ENCODE measurements at regions of chr14 and their contacts with region 1.

Region 1: DNA sequence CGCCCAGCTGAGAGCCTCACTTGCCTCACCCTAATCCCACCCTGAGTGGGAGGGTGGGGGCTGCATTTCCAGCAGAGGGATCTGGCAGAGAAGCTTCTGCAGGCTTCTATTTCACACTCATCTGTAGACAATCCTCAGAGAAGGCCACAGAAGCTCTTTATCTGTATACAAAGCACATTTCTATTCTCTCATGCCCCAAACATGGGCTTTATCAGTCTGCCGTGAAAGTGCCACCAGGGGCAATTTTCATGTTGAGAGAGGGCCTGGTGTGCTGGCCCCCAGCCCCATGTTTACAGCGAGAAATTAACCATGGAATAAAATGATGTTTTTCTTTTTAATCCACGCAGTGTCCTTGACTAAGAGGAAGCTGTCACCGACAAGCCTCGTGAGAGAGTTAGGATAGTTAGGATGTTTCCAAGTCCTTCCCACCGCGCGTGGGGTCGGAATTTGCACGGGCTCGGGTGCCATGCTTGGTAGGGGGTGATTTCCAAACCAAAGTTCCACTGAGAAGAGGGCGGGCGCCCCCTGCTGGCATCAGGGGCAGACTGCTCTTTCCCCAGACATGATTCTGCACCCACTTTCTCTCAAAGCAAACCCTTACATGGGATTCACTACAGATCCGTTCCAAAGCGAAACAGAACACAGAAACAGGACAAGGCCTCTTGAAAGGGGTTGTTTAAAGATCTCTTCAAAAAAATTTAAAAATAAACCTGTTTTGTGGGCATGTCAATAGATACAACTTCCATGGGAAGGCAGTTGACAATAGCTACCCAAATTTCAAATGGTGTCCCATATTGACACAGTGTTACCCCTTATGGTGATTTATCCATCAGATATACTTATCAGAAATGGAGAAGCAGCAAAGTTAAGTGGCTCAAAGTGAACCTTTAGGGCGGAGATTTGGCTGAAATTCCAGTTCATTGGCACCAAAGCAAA is 19.4 kb downstream of the BDKRB1 start:
- DNase-seq: peak; percentile 34 to 74 (median 63)
- ATAC-seq: no peak
- H3K4me3 ChIP-seq: no peak overlapping the region
- H3K4me3 Mint-ChIP-seq: no peak overlapping the region
- H3K27ac ChIP-seq: no peak overlapping the region
- H3K27ac Mint-ChIP-seq: no peak overlapping the region
- H3K4me1 ChIP-seq: no peaks in the 10 kb centered on the region
- H3K4me1 Mint-ChIP-seq: no peaks in the 10 kb centered on the region
- H3K27me3 ChIP-seq: no peaks in the 10 kb centered on the region
- H3K27me3 Mint-ChIP-seq: no peaks in the 10 kb centered on the region
- CTCF ChIP-seq: peak; percentile 81

Region 2: DNA sequence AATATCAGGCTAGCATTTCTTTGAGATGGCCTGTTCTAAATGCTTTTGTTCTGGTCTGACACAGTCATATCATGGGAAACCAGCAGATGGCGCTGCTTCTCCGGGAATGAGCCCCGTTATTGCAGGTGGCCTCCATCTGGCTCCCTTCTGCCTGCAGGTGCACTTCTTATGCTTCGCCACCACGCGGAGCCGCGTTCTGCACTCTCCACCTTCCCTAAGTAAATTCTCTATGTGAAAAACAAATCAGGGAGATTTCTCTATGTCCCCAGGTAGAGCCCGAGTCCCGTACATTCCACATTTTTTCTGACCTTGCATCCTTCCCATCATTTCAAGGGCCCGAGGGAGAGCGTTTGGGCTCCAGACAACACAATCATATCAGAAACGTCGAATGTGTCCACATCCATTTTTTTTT is 714.4 kb before region 1 on chr14:
- CTCF ChIA-PET with region 1: interaction called, 5 read pairs
- POLR2A ChIA-PET with region 1: no interaction called
- intact Hi-C with region 1: loop called in 1 of 2 experiments (anchors 10 kb)
- DNase-seq: peak; percentile 62 to 88 (median 84)
- ATAC-seq: peak; percentile 88
- H3K4me3 ChIP-seq: no peak overlapping the region
- H3K4me3 Mint-ChIP-seq: no peak overlapping the region
- H3K27ac ChIP-seq: no peak overlapping the region
- H3K27ac Mint-ChIP-seq: no peak overlapping the region
- H3K4me1 ChIP-seq: no peaks in the 10 kb centered on the region
- H3K4me1 Mint-ChIP-seq: peaks cover 4% of the 10 kb centered on the region
- H3K27me3 ChIP-seq: no peaks in the 10 kb centered on the region
- H3K27me3 Mint-ChIP-seq: peaks cover 5% of the 10 kb centered on the region
- CTCF ChIP-seq: peak; percentile 86

Region 3: DNA sequence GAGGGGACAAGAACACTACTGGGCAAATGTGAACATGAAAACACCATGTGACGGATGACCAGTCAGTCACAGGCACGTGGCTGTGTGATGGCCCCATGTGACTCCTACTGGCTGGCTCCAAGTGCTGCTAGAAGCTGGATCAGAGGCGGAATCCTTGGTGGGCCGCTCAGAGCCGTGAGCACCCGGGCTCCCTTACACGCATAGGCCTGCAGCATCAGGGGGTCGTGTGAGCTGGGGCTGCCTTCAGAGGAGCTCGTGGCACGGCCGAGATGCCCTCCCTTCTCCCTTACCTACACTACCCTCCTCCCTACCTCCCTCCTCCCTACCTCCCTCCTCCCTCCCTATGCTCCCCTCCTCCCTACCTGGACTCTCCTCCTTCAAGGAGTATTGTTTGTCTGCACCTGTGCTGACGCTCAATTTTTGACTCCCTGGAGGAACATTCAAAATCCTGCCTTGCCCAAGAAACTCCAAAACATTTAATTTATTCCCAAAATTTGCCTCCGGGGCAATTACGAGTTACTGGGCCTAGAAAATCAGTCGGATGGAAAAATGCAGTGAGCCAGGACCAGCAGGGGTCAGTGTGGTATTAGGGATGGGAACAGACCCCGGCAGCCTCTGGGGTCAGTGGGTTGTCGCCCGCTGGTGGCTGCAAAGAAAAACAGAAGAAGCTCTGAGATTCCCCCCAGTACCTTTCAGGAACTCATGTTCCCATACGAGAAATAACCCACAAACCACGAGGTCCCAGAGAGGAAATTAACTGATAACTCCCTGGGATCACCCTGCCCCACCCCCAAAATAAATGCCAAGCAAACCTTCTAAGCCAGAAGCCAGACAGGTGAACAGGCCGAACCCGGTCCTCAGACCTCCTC is 175.1 kb before region 1 on chr14:
- CTCF ChIA-PET with region 1: interaction called, 75 read pairs
- POLR2A ChIA-PET with region 1: no interaction called
- intact Hi-C with region 1: loop called (anchors 1 kb)
- DNase-seq: peak; percentile 44 to 79 (median 66)
- ATAC-seq: peak; percentile 46
- H3K4me3 ChIP-seq: no peak overlapping the region
- H3K4me3 Mint-ChIP-seq: no peak overlapping the region
- H3K27ac ChIP-seq: no peak overlapping the region
- H3K27ac Mint-ChIP-seq: no peak overlapping the region
- H3K4me1 ChIP-seq: no peaks in the 10 kb centered on the region
- H3K4me1 Mint-ChIP-seq: no peaks in the 10 kb centered on the region
- H3K27me3 ChIP-seq: no peaks in the 10 kb centered on the region
- H3K27me3 Mint-ChIP-seq: peaks cover 3% of the 10 kb centered on the region
- CTCF ChIP-seq: peak; percentile 73

Region 4: GRCh38 chr14:96126339-96126782 is 149.1 kb before region 1 on chr14:
- CTCF ChIA-PET with region 1: interaction called, 11 read pairs
- POLR2A ChIA-PET with region 1: no interaction called
- intact Hi-C with region 1: no loop called
- DNase-seq: peak in 8 of 9 experiments; percentile 10 to 85 (median 40)
- ATAC-seq: peak; percentile 87
- H3K4me3 ChIP-seq: no peak overlapping the region
- H3K4me3 Mint-ChIP-seq: peak overlapping the region; percentile 76
- H3K27ac ChIP-seq: peak overlapping the region; percentile 26 to 74
- H3K27ac Mint-ChIP-seq: peak overlapping the region; percentile 94
- H3K4me1 ChIP-seq: peaks cover 21% of the 10 kb centered on the region
- H3K4me1 Mint-ChIP-seq: peaks cover 29% of the 10 kb centered on the region
- H3K27me3 ChIP-seq: no peaks in the 10 kb centered on the region
- H3K27me3 Mint-ChIP-seq: peaks cover 8% of the 10 kb centered on the region
- CTCF ChIP-seq: no peak

Region 5: GRCh38 chr14:96260341-96260821 is 15.1 kb before region 1 on chr14:
- CTCF ChIA-PET with region 1: interaction called, 15 read pairs
- POLR2A ChIA-PET with region 1: no interaction called
- intact Hi-C with region 1: no loop called
- DNase-seq: no peak
- ATAC-seq: no peak
- H3K4me3 ChIP-seq: no peak overlapping the region
- H3K4me3 Mint-ChIP-seq: no peak overlapping the region
- H3K27ac ChIP-seq: no peak overlapping the region
- H3K27ac Mint-ChIP-seq: no peak overlapping the region
- H3K4me1 ChIP-seq: no peaks in the 10 kb centered on the region
- H3K4me1 Mint-ChIP-seq: no peaks in the 10 kb centered on the region
- H3K27me3 ChIP-seq: peaks cover 0 to 3% of the 10 kb centered on the region in 2 experiments
- H3K27me3 Mint-ChIP-seq: peaks cover 9% of the 10 kb centered on the region
- CTCF ChIP-seq: no peak